ENCODE measurements at regions of chr7 and their contacts with region 1.

Region 1: DNA sequence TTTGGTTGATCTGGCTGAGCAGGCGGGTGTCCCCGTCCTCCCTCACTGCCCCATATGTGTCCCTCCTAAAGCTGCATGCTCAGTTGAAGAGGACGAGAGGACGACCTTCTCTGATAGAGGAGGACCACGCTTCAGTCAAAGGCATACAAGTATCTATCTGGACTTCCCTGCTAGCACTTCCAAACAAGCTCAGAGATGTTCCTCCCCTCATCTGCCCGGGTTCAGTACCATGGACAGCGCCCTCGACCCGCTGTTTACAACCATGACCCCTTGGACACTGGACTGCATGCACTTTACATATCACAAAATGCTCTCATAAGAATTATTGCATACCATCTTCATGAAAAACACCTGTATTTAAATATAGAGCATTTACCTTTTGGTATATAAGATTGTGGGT is 26.9 kb upstream of the TRIM56 start:
- DNase-seq: no peak
- H3K4me3 ChIP-seq: no peak overlapping the region
- H3K27ac ChIP-seq: no peak overlapping the region
- H3K4me1 ChIP-seq: peaks cover 0 to 4% (median 0%) of the 10 kb centered on the region in 4 donors
- H3K27me3 ChIP-seq: peaks cover 0 to 71% (median 0%) of the 10 kb centered on the region in 4 donors
- CTCF ChIP-seq: peak in 1 of 3 experiments; percentile 17
- EP300 ChIP-seq: no peak
- POLR2A ChIP-seq: no peak

Region 2: GRCh38 chr7:100949227-100949932 is 109.0 kb before region 1 on chr7 and contains the start of gene MUC3A:
- intact Hi-C with region 1: no loop called
- DNase-seq: no peak
- H3K4me3 ChIP-seq: no peak within 1 kb of the TSS
- H3K27ac ChIP-seq: no peak within 1 kb of the TSS
- H3K4me1 ChIP-seq: no peaks in the 10 kb centered on the region
- H3K27me3 ChIP-seq: peaks cover 0 to 70% (median 8%) of the 10 kb centered on the region in 4 donors
- CTCF ChIP-seq: no peak
- EP300 ChIP-seq: no peak
- POLR2A ChIP-seq: no peak
- total RNA-seq, gene MUC3A: under 0.01 to 0.23 TPM in 2 of 4 donors, not detected in the others

Region 3: DNA sequence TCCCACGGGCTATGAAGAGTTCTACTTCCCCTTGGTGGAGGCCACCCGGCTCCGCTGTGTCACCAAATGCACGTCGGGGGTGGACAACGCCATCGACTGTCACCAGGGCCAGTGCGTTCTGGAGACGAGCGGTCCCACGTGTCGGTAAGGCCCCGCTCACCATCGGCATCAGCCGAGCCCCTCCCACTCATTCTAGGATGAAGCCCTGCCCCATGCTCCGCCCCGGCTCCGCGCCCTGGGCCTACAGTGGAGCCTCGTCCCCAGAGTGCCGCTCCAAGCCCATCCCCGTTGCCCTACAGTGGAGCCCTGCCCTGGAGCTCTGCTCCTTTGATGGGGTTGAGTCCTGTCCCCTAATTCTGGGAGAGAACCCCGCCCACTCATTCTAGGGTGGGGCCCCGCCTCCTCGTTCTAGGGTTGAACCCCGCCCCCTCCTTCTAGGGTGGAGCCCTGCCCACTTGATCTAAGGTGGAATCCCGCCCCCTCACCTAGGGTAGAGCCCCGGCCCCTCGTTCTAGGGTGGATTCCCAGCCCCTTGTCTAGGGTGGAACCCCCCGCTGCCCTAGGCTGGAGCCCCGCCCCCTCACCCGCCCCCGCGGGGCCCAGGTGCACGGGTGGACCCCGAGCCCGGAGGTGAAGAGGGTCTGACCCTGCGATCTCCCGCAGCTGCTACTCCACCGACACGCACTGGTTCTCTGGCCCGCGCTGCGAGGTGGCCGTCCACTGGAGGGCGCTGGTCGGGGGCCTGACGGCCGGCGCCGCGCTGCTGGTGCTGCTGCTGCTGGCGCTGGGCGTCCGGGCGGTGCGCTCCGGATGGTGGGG is 92.4 kb before region 1 on chr7:
- intact Hi-C with region 1: loop called (anchors 5 kb)
- DNase-seq: no peak
- H3K4me3 ChIP-seq: peak overlapping the region; percentile 29 to 51 (median 38)
- H3K27ac ChIP-seq: no peak overlapping the region
- H3K4me1 ChIP-seq: peaks cover 12 to 18% (median 17%) of the 10 kb centered on the region in 4 donors
- H3K27me3 ChIP-seq: peaks cover 9 to 87% (median 43%) of the 10 kb centered on the region in 4 donors
- CTCF ChIP-seq: peak; percentile 49 to 80 (median 51)
- EP300 ChIP-seq: no peak
- POLR2A ChIP-seq: no peak

Measured in esophagus muscularis mucosa (tissue), 4 donors.